ENCODE measurements at regions of chr3 and their contacts with region 1.

Region 1: DNA sequence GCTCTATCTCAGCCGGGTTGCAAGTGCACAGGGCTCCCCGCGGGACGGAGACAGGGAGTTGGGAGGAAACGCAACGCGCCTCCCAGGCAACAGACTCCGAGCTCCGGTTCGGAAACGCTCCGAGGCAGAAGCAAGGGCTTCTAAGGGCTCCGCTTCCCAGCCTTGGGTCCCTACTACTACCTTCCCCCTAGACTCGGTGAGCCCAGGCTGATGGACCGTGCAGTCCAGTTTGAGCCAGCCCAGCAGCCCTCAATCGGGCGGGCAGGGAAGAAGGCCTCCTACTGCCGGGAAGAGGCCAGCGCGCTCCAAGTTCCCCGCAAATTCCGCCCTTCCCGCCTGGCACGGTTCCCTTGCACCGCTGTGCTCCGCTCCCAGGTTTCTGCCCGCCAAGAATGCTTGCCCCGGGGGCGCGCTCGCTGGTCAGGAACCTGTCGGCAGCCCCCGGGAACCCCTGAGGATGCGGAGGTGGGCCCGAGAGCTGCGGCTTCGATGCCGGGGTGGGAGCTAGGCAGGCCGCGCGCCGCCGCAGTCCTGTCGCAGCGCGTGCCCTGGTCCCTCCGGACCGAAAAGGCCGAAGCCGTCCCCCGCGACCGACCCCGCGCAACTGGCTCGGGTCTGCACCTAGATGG is 728 bp downstream of the TRANK1 start:
- DNase-seq: peak; percentile 14 to 42 (median 28)
- ATAC-seq: peak; percentile 46
- H3K4me3 ChIP-seq: peak overlapping the region; percentile 70
- H3K4me3 Mint-ChIP-seq: peak overlapping the region; percentile 79 to 91 (median 85)
- H3K27ac ChIP-seq: peak overlapping the region; percentile 74
- H3K27ac Mint-ChIP-seq: peak overlapping the region; percentile 42 to 87 (median 63)
- H3K4me1 ChIP-seq: peaks cover 5 to 6% of the 10 kb centered on the region in 2 donors
- H3K4me1 Mint-ChIP-seq: peaks cover 0 to 33% (median 26%) of the 10 kb centered on the region in 7 donors
- H3K27me3 ChIP-seq: no peaks in the 10 kb centered on the region
- H3K27me3 Mint-ChIP-seq: peaks cover 0 to 28% (median 0%) of the 10 kb centered on the region in 5 donors

Region 2: DNA sequence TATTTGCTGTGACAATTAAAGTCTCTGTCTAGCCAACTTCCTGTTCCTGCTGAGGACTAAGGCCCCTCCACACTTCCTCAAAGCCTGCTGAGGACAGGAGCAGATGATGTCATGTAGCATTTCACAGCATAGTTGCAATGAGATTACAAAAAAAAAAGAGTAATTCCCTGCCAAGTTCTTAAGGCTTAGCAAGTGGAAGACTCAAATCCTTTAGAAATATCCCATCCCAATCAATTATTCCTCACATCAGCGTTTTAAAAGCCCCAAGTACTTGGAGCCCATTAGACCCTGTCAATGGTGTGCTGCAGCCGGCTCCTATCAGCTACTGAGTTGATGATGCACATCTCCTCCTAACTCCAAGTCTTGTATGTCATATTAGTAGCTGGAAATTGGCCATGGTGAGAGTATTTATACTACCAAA is 51.0 kb before region 1 on chr3:
- CTCF ChIA-PET with region 1: interaction called, 6 read pairs
- POLR2A ChIA-PET with region 1: interaction called, 17 read pairs
- intact Hi-C with region 1: no loop called
- DNase-seq: peak in 7 of 9 donors; percentile 31 to 80 (median 69)
- ATAC-seq: peak; percentile 92
- H3K4me3 ChIP-seq: no peak overlapping the region
- H3K4me3 Mint-ChIP-seq: peak overlapping the region in 8 of 10 donors; percentile 17 to 64 (median 48)
- H3K27ac ChIP-seq: peak overlapping the region; percentile 59
- H3K27ac Mint-ChIP-seq: peak overlapping the region; percentile 58 to 95 (median 94)
- H3K4me1 ChIP-seq: peaks cover 29 to 38% of the 10 kb centered on the region in 2 donors
- H3K4me1 Mint-ChIP-seq: peaks cover 45 to 75% (median 57%) of the 10 kb centered on the region in 7 donors
- H3K27me3 ChIP-seq: no peaks in the 10 kb centered on the region
- H3K27me3 Mint-ChIP-seq: no peaks in the 10 kb centered on the region

Region 3: GRCh38 chr3:36993326-36994283 is 49.5 kb after region 1 on chr3 and contains the start of gene MLH1:
- CTCF ChIA-PET with region 1: no interaction called
- POLR2A ChIA-PET with region 1: interaction called, 33 read pairs
- intact Hi-C with region 1: loop called (anchors 1 kb)
- DNase-seq: peak; percentile 91 to 100 (median 99)
- ATAC-seq: peak; percentile 90
- H3K4me3 ChIP-seq: peak within 1 kb of the TSS; percentile 80
- H3K4me3 Mint-ChIP-seq: peak within 1 kb of the TSS in 1 of 10 donors; percentile 26
- H3K27ac ChIP-seq: peak within 1 kb of the TSS; percentile 83
- H3K27ac Mint-ChIP-seq: no peak within 1 kb of the TSS
- H3K4me1 ChIP-seq: peaks cover 36 to 40% of the 10 kb centered on the region in 2 donors
- H3K4me1 Mint-ChIP-seq: peaks cover 23 to 43% (median 38%) of the 10 kb centered on the region in 7 donors
- H3K27me3 ChIP-seq: no peaks in the 10 kb centered on the region
- H3K27me3 Mint-ChIP-seq: no peaks in the 10 kb centered on the region
- total RNA-seq, gene MLH1: 26.4 to 42.0 (median 31.7) TPM

Measured in naive thymus-derived CD4-positive, alpha-beta T cell (primary cell).